Calu3 (cell line): ENCODE measurements at regions of chr7 and their contacts with region 1.

Region 1: GRCh38 chr7:39580149-39580874 is 14.1 kb downstream of the YAE1 start:
- DNase-seq: peak; percentile 87
- H3K4me3 Mint-ChIP-seq: no peak overlapping the region
- H3K27ac Mint-ChIP-seq: no peak overlapping the region
- H3K4me1 Mint-ChIP-seq: peaks cover 13% of the 10 kb centered on the region
- H3K27me3 Mint-ChIP-seq: no peaks in the 10 kb centered on the region
- CTCF ChIP-seq: peak; percentile 88

Region 2: DNA sequence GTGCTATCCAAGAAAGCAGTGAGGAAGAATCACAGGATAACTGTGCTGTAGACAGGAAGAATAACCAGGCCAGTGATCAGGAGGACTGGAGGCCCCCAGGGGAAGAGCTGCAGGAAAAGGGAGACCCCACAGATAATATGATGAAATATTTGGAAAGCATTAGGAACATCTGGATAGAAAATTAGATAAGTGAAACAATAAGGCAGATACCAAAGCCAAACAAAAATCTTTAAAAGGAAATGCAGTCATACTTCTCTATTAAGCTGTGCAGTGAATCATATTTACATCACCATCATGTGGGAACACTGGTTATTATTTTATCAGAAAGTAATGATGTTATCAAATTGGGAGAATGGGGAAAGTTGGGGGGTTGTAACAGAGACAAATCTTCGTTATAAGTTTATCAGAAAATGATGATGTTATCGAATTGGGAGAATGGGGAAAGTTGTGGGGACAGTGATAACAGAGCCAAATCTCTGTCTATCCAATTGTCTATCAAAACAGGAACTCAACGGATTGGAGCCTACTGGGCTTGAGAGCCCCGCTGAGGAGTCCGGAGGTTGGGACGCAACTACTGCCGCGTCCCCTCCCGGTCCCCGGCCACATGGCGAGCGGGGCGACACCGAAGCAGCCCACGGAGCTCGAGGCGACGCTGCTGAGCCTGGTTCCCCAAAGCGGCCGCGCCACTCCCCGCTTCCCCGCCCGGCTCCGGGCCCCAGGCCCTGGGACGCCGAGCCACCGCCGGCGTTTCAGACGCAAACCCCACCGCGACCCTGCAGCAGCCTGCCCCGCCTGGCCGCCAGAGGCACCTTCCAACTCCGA is 29.0 kb after region 1 on chr7:
- CTCF ChIA-PET with region 1: interaction called, 11 read pairs
- intact Hi-C with region 1: no loop called
- DNase-seq: peak; percentile 64
- H3K4me3 Mint-ChIP-seq: peak overlapping the region; percentile 23
- H3K27ac Mint-ChIP-seq: peak overlapping the region; percentile 51
- H3K4me1 Mint-ChIP-seq: peaks cover 56% of the 10 kb centered on the region
- H3K27me3 Mint-ChIP-seq: no peaks in the 10 kb centered on the region
- CTCF ChIP-seq: no peak

Region 3: GRCh38 chr7:39623018-39623731 is 42.9 kb after region 1 on chr7 and contains the start of gene RALA:
- CTCF ChIA-PET with region 1: interaction called, 23 read pairs
- intact Hi-C with region 1: loop called (anchors 5 kb)
- DNase-seq: peak; percentile 98
- H3K4me3 Mint-ChIP-seq: peak within 1 kb of the TSS; percentile 81
- H3K27ac Mint-ChIP-seq: peak within 1 kb of the TSS; percentile 85
- H3K4me1 Mint-ChIP-seq: peaks cover 38% of the 10 kb centered on the region
- H3K27me3 Mint-ChIP-seq: no peaks in the 10 kb centered on the region
- CTCF ChIP-seq: no peak
- total RNA-seq, gene RALA: 58.1 and 64.8 TPM in 2 replicates

Region 4: GRCh38 chr7:39732837-39733804 is 152.8 kb after region 1 on chr7:
- CTCF ChIA-PET with region 1: interaction called, 20 read pairs
- intact Hi-C with region 1: no loop called
- DNase-seq: peak; percentile 98
- H3K4me3 Mint-ChIP-seq: peak overlapping the region; percentile 94
- H3K27ac Mint-ChIP-seq: peak overlapping the region; percentile 98
- H3K4me1 Mint-ChIP-seq: peaks cover 35% of the 10 kb centered on the region
- H3K27me3 Mint-ChIP-seq: no peaks in the 10 kb centered on the region
- CTCF ChIP-seq: no peak

Region 5: DNA sequence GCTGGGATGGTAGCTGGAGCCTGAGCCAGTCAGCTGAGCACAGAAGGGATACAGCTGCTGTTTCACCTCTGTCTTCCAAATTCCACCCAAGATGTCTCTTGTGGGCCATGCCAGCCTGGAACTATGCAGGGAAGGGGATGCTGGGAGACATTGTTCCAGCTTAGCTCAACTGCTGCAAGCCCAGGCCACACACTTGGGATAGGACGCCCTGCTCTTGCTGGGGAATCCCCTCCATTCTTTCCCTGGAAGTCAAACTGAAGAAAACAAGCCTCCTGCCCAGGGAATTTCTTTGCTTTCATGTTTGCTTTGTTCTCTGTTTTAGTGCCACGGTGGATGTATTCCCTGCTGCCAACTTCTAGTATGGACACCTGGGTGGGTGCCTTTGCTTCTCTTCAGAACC is 314.6 kb after region 1 on chr7:
- CTCF ChIA-PET with region 1: interaction called, 7 read pairs
- intact Hi-C with region 1: loop called (anchors 5 kb)
- DNase-seq: no peak
- H3K4me3 Mint-ChIP-seq: no peak overlapping the region
- H3K27ac Mint-ChIP-seq: no peak overlapping the region
- H3K4me1 Mint-ChIP-seq: peaks cover 50% of the 10 kb centered on the region
- H3K27me3 Mint-ChIP-seq: peaks cover 7% of the 10 kb centered on the region
- CTCF ChIP-seq: no peak

Region 6: DNA sequence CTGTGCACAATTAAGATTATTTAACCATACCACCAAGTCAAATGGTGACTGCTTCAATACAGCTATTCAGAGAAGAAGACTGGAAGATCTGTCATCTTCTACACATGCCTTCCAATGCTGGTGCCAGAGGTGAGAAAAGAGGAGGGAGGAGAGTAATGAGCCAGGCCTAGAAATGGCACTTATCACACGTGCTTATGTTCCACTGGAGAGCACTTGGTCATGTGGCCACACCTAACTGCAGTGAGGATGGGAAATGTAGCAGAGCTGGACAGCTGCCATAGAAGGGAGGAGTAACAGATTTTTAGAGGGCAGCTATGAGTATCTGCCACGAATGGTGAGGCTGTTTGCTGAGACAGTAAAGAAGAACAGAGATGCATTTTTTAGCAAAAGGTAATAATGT is 477.0 kb after region 1 on chr7:
- CTCF ChIA-PET with region 1: interaction called, 10 read pairs
- intact Hi-C with region 1: loop called (anchors 2 kb)
- DNase-seq: no peak
- H3K4me3 Mint-ChIP-seq: no peak overlapping the region
- H3K27ac Mint-ChIP-seq: no peak overlapping the region
- H3K4me1 Mint-ChIP-seq: peaks cover 12% of the 10 kb centered on the region
- H3K27me3 Mint-ChIP-seq: no peaks in the 10 kb centered on the region
- CTCF ChIP-seq: no peak